Left ventricle myocardium inferior (tissue), 1 donor: ENCODE measurements at regions of chr3 and their contacts with region 1.

Region 1: GRCh38 chr3:79032686-79033318 is 735.0 kb downstream of the ROBO1 start:
- DNase-seq: no peak
- H3K4me3 ChIP-seq: no peak overlapping the region
- H3K27ac ChIP-seq: no peak overlapping the region
- H3K4me1 ChIP-seq: no peaks in the 10 kb centered on the region
- H3K27me3 ChIP-seq: no peaks in the 10 kb centered on the region
- CTCF ChIP-seq: peak; percentile 67

Region 2: DNA sequence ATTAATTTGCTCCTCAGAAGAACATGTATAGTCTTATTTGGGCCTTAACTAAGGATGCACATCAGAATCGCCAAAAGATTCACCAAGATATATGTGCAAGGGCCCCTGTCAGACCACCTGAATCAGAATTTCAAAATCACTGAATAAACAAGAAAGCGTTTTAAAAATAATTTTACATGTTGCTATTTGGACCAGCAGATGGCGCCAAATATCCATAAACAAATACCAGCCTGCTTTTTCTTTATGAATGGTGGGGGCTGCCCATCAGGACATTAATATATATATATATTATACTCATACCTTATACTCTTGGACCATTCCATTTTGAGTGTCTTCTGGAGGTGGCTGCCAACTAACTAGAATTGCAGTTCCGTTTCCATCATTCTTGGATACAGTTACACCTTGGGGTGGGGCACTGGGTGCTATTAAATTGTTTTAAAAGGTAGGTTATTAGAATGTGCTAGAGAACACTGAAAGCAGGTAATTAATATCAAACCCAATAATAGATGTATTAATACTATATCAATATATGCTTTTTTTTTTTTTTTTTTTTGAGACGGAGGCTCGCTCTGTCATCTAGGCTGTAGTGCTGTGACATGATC is 373.3 kb before region 1 on chr3:
- intact Hi-C with region 1: loop called (anchors 5 kb)
- DNase-seq: no peak
- H3K4me3 ChIP-seq: no peak overlapping the region
- H3K27ac ChIP-seq: no peak overlapping the region
- H3K4me1 ChIP-seq: no peaks in the 10 kb centered on the region
- H3K27me3 ChIP-seq: no peaks in the 10 kb centered on the region
- CTCF ChIP-seq: peak; percentile 75

Region 3: DNA sequence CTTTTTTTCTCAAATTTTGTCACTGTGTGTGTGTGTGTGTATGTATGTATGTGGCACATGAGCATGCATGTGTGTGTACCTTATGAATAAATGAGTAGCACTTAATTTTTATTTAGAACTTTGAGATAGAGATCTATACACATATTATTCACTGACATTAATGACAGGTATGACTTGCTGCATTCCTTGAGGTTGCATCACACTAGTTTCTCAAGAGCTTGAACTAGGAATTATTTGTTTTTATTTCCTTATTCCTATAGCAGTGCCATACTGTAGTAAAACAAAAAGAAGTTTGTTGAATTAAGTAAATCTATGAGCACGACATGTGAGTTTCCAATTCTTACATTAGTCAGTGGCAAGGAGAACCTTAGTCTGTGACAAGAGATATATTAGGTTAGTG is 208.9 kb before region 1 on chr3:
- intact Hi-C with region 1: no loop called
- DNase-seq: no peak
- H3K4me3 ChIP-seq: no peak overlapping the region
- H3K27ac ChIP-seq: no peak overlapping the region
- H3K4me1 ChIP-seq: no peaks in the 10 kb centered on the region
- H3K27me3 ChIP-seq: no peaks in the 10 kb centered on the region
- CTCF ChIP-seq: no peak

Region 4: DNA sequence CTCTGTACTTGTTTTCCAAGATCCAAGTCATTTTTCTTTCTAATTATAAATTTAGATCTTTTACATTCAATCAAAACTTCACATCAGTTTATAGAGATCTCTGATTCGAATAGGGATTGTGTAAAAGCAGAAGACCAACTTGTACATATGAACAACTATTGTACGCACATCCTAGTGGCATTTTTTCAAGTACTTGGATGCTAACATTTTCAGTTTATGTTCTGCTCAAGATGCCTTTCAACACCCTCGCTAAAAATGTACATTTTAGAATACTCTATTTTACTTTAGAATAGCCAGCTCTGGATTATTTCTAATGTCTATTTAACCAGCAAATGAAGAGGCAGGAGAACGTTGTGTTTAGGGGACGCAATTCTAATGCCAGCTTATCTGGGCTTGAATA is 394.3 kb after region 1 on chr3:
- intact Hi-C with region 1: no loop called
- DNase-seq: no peak
- H3K4me3 ChIP-seq: no peak overlapping the region
- H3K27ac ChIP-seq: no peak overlapping the region
- H3K4me1 ChIP-seq: no peaks in the 10 kb centered on the region
- H3K27me3 ChIP-seq: no peaks in the 10 kb centered on the region
- CTCF ChIP-seq: no peak